ENCODE measurements at regions of chr19 and their contacts with region 1.

Region 1: GRCh38 chr19:28878862-28879566 is 333.9 kb downstream of the UQCRFS1 start:
- DNase-seq: peak; percentile 60 to 87
- ATAC-seq: no peak
- H3K4me3 ChIP-seq: no peak overlapping the region
- H3K27ac ChIP-seq: no peak overlapping the region
- H3K4me1 ChIP-seq: no peaks in the 10 kb centered on the region
- H3K27me3 ChIP-seq: no peaks in the 10 kb centered on the region

Region 2: GRCh38 chr19:28466107-28467045 is 412.6 kb before region 1 on chr19:
- intact Hi-C with region 1: loop called in 1 of 2 experiments (anchors 10 kb)
- DNase-seq: peak in 1 of 2 donors; percentile 69
- ATAC-seq: no peak
- H3K4me3 ChIP-seq: no peak overlapping the region
- H3K27ac ChIP-seq: no peak overlapping the region
- H3K4me1 ChIP-seq: no peaks in the 10 kb centered on the region
- H3K27me3 ChIP-seq: no peaks in the 10 kb centered on the region

Region 3: GRCh38 chr19:28737021-28737895 is 141.8 kb before region 1 on chr19:
- intact Hi-C with region 1: loop called in 1 of 2 experiments (anchors 5 kb)
- DNase-seq: no peak
- ATAC-seq: peak; percentile 66
- H3K4me3 ChIP-seq: no peak overlapping the region
- H3K27ac ChIP-seq: no peak overlapping the region
- H3K4me1 ChIP-seq: no peaks in the 10 kb centered on the region
- H3K27me3 ChIP-seq: no peaks in the 10 kb centered on the region

Region 4: DNA sequence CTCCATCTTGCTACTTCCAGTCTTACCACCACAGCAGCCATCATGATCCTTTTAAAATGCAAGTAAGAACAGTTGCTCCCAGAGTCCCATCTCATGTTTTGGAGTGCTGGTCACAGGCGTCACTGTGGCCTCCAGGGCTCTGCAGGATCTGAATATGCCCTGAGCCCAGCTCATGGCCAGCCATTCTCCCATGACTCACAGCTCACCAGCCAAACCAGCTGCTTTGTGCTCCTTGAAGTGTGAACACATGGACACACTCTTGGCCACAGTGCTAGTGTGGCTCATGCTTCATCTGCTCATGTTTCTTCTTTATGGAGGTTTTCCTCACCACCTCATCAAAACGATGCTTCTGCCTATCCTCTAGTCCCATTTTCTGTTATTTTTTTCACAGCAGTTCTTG is 132.5 kb before region 1 on chr19:
- intact Hi-C with region 1: loop called in 1 of 2 experiments (anchors 5 kb)
- DNase-seq: no peak
- ATAC-seq: no peak
- H3K4me3 ChIP-seq: no peak overlapping the region
- H3K27ac ChIP-seq: no peak overlapping the region
- H3K4me1 ChIP-seq: no peaks in the 10 kb centered on the region
- H3K27me3 ChIP-seq: no peaks in the 10 kb centered on the region

Region 5: GRCh38 chr19:28864577-28865042 is 14.4 kb before region 1 on chr19:
- intact Hi-C with region 1: no loop called
- DNase-seq: no peak
- ATAC-seq: no peak
- H3K4me3 ChIP-seq: no peak overlapping the region
- H3K27ac ChIP-seq: no peak overlapping the region
- H3K4me1 ChIP-seq: no peaks in the 10 kb centered on the region
- H3K27me3 ChIP-seq: no peaks in the 10 kb centered on the region

Region 6: GRCh38 chr19:28915737-28916460 is 36.9 kb after region 1 on chr19:
- intact Hi-C with region 1: no loop called
- DNase-seq: no peak
- ATAC-seq: no peak
- H3K4me3 ChIP-seq: no peak overlapping the region
- H3K27ac ChIP-seq: no peak overlapping the region
- H3K4me1 ChIP-seq: no peaks in the 10 kb centered on the region
- H3K27me3 ChIP-seq: no peaks in the 10 kb centered on the region

Measured in aorta (tissue), 5 donors.